HepG2 (cell line): ENCODE measurements at regions of chr5 and their contacts with region 1.

Region 1: DNA sequence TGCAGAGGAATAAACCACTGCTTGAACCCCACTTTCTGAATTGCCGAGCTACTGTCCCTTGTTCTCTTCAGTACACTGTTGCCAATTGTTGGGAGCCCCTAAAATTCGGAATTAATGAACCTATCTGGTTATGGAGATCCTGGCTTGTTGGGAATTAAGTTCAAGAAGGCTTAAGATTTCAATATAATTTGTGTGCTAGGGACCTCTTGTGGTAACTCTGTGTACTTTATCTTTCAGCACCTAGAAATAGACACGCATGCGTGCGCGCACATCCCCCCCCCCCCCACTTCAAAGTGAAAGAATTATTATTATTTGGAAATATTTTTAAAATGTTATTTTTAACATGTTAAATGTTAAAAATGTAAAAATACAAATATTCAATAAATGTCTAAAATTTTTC is 53.3 kb upstream of the FAM169A start:
- DNase-seq: peak; percentile 60
- ATAC-seq: no peak
- H3K4me3 ChIP-seq: no peak overlapping the region
- H3K27ac ChIP-seq: no peak overlapping the region
- H3K4me1 ChIP-seq: peaks cover 51% of the 10 kb centered on the region
- H3K27me3 ChIP-seq: no peaks in the 10 kb centered on the region
- CTCF ChIP-seq: peak; percentile 75
- EP300 ChIP-seq: no peak
- POLR2A ChIP-seq: no peak
- RAD21 ChIP-seq: 0 out of 2 replicates have a peak, but pooled peaks have one; percentile 59

Region 2: GRCh38 chr5:73902327-73903051 is 1017.0 kb before region 1 on chr5:
- CTCF ChIA-PET with region 1: no interaction called
- POLR2A ChIA-PET with region 1: no interaction called
- in situ Hi-C with region 1: no loop called
- intact Hi-C with region 1: loop called (anchors 5 kb)
- DNase-seq: peak; percentile 41
- ATAC-seq: peak; percentile 28; the same call in 2 of the 3 replicates
- H3K4me3 ChIP-seq: no peak overlapping the region
- H3K27ac ChIP-seq: no peak overlapping the region
- H3K4me1 ChIP-seq: no peaks in the 10 kb centered on the region
- H3K27me3 ChIP-seq: no peaks in the 10 kb centered on the region
- CTCF ChIP-seq: peak; percentile 73
- EP300 ChIP-seq: no peak
- POLR2A ChIP-seq: no peak
- RAD21 ChIP-seq: peak; percentile 56; the same call in 1 of the 2 replicates

Region 3: GRCh38 chr5:74673011-74673790 is 246.3 kb before region 1 on chr5:
- CTCF ChIA-PET with region 1: interaction called, 3 read pairs
- POLR2A ChIA-PET with region 1: no interaction called
- in situ Hi-C with region 1: loop called (anchors 5 kb)
- intact Hi-C with region 1: loop called (anchors 1 kb)
- DNase-seq: peak; percentile 29
- ATAC-seq: peak; percentile 47
- H3K4me3 ChIP-seq: no peak overlapping the region
- H3K27ac ChIP-seq: no peak overlapping the region
- H3K4me1 ChIP-seq: peaks cover 52% of the 10 kb centered on the region
- H3K27me3 ChIP-seq: no peaks in the 10 kb centered on the region
- CTCF ChIP-seq: peak; percentile 58
- EP300 ChIP-seq: no peak
- POLR2A ChIP-seq: no peak
- RAD21 ChIP-seq: peak; percentile 45; the same call in 1 of the 2 replicates

Region 4: DNA sequence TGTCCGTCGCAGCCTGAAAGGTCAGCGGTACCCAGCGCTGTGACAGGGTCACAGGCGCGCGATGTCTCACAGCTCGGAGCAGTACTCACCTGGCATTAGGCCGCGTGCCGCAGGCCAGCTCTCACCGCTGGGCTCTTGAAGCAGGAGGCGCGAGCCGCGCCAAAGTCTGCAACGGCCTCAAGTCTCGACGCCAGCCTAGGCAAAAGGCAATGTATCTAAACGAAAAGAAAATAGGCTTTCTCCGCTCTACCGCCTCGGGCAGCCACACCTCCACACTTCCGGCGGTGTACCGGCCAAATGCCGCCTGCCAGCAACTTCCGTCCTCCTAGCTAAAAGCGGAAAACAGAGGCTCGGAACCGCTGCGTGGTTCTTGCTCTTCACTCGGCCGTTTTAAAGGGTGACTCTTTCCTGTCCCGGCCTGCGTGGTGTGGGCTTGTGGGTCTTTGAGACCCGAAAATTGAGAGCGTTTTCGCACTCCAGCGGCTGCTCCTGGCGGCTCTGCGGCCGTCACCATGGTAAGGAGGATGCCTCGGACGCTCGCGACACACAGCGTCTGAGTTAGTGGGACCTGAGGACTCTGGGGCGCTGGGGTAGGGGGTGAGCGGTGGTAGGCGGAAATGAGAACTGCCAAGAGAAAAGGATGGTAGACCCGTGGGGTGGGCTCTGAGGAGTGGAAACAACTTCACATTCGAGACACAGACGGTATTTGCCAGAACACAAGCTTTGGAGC is 152.5 kb before region 1 on chr5 and contains the starts of genes GFM2 and NSA2:
- CTCF ChIA-PET with region 1: interaction called, 14 read pairs
- POLR2A ChIA-PET with region 1: interaction called, 8 read pairs
- in situ Hi-C with region 1: loop called (anchors 5 kb)
- intact Hi-C with region 1: loop called (anchors 5 kb)
- DNase-seq: peak; percentile 87
- ATAC-seq: peak; percentile 91
- H3K4me3 ChIP-seq: peak within 1 kb of the TSS; percentile 87 to 94 (median 93)
- H3K27ac ChIP-seq: peak within 1 kb of the TSS; percentile 69
- H3K4me1 ChIP-seq: peaks cover 27% of the 10 kb centered on the region
- H3K27me3 ChIP-seq: no peaks in the 10 kb centered on the region; a peak in 1 of 5 replicates
- CTCF ChIP-seq: no peak
- EP300 ChIP-seq: peak in 1 of 2 experiments; percentile 33; a peak in 1 of 4 replicates
- POLR2A ChIP-seq: peak; percentile 64 to 69; a peak in 3 of 4 replicates
- RAD21 ChIP-seq: no peak; the same call in none of the 2 replicates
- total RNA-seq, gene GFM2: 41.6 and 49.1 TPM in 2 replicates
- total RNA-seq, gene NSA2: 101 and 157 TPM in 2 replicates

Region 5: GRCh38 chr5:74865804-74866595 is 53.5 kb before region 1 on chr5 and contains the start of gene FAM169A:
- CTCF ChIA-PET with region 1: no interaction called
- POLR2A ChIA-PET with region 1: interaction called, 13 read pairs
- in situ Hi-C with region 1: no loop called
- intact Hi-C with region 1: loop called (anchors 2 kb)
- DNase-seq: no peak
- ATAC-seq: peak; percentile 65
- H3K4me3 ChIP-seq: peak within 1 kb of the TSS; percentile 87 to 97 (median 95)
- H3K27ac ChIP-seq: peak within 1 kb of the TSS; percentile 96
- H3K4me1 ChIP-seq: peaks cover 77% of the 10 kb centered on the region
- H3K27me3 ChIP-seq: no peaks in the 10 kb centered on the region; a peak in 1 of 5 replicates
- CTCF ChIP-seq: peak; percentile 30; the same call in 1 of the 2 replicates
- EP300 ChIP-seq: no peak
- POLR2A ChIP-seq: peak in 1 of 2 experiments; percentile 54; a peak in 2 of 4 replicates
- RAD21 ChIP-seq: peak; percentile 53
- total RNA-seq, gene FAM169A: 84.8 and 110 TPM in 2 replicates

Region 6: DNA sequence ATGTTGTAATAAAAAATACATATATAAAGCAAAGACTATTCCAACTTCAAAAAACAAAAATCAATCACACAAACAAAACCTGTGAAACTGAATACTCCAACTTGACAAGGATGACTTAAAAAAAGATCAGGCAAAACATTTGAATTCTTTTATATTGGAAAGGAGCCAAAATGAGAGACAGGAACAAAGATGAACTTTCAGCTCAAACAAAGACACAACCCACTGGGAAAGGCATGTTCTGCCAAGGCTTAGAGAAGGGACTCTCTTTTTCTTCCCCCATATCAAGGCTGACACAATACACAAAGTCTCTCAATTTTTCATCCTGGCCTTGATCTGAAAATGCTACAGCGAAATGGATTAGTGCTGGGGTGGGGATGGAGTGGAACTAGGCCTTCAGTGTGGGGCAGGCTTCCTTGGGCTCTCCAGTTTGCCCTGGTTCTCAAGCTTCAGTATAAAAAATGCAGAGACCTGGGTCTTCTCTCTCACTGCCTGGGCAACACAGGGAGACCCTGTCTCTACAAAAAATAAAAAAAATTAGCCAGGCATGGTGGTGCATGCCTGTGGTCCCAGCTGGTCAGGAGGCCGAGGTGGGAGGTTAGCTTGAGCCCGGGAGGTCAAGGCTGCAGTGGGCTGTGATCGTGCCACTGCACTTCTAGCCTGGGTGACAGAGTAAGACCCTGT is 41.7 kb before region 1 on chr5:
- CTCF ChIA-PET with region 1: interaction called, 3 read pairs
- POLR2A ChIA-PET with region 1: interaction called, 26 read pairs
- in situ Hi-C with region 1: no loop called
- intact Hi-C with region 1: loop called (anchors 2 kb)
- DNase-seq: peak; percentile 90
- ATAC-seq: peak; percentile 77
- H3K4me3 ChIP-seq: peak overlapping the region in 2 of 3 experiments; percentile 14 to 42; a peak in 4 of 6 replicates
- H3K27ac ChIP-seq: peak overlapping the region; percentile 96
- H3K4me1 ChIP-seq: peaks cover 74% of the 10 kb centered on the region
- H3K27me3 ChIP-seq: no peaks in the 10 kb centered on the region
- CTCF ChIP-seq: no peak
- EP300 ChIP-seq: peak in 1 of 2 experiments; percentile 93; a peak in 2 of 4 replicates
- POLR2A ChIP-seq: peak; percentile 24 to 36; a peak in 1 of 4 replicates
- RAD21 ChIP-seq: no peak

Region 7: GRCh38 chr5:74974451-74975091 is 55.1 kb after region 1 on chr5:
- CTCF ChIA-PET with region 1: no interaction called
- POLR2A ChIA-PET with region 1: no interaction called
- in situ Hi-C with region 1: no loop called
- intact Hi-C with region 1: no loop called
- DNase-seq: no peak
- ATAC-seq: no peak
- H3K4me3 ChIP-seq: no peak overlapping the region
- H3K27ac ChIP-seq: no peak overlapping the region
- H3K4me1 ChIP-seq: peaks cover 38% of the 10 kb centered on the region
- H3K27me3 ChIP-seq: no peaks in the 10 kb centered on the region
- CTCF ChIP-seq: no peak
- EP300 ChIP-seq: no peak
- POLR2A ChIP-seq: no peak
- RAD21 ChIP-seq: no peak

Region 8: GRCh38 chr5:75192804-75193203 is 273.3 kb after region 1 on chr5:
- CTCF ChIA-PET with region 1: no interaction called
- POLR2A ChIA-PET with region 1: no interaction called
- in situ Hi-C with region 1: no loop called
- intact Hi-C with region 1: no loop called
- DNase-seq: no peak
- ATAC-seq: no peak
- H3K4me3 ChIP-seq: no peak overlapping the region
- H3K27ac ChIP-seq: no peak overlapping the region
- H3K4me1 ChIP-seq: peaks cover 12% of the 10 kb centered on the region
- H3K27me3 ChIP-seq: no peaks in the 10 kb centered on the region
- CTCF ChIP-seq: no peak
- EP300 ChIP-seq: no peak
- POLR2A ChIP-seq: no peak
- RAD21 ChIP-seq: no peak

Region 9: DNA sequence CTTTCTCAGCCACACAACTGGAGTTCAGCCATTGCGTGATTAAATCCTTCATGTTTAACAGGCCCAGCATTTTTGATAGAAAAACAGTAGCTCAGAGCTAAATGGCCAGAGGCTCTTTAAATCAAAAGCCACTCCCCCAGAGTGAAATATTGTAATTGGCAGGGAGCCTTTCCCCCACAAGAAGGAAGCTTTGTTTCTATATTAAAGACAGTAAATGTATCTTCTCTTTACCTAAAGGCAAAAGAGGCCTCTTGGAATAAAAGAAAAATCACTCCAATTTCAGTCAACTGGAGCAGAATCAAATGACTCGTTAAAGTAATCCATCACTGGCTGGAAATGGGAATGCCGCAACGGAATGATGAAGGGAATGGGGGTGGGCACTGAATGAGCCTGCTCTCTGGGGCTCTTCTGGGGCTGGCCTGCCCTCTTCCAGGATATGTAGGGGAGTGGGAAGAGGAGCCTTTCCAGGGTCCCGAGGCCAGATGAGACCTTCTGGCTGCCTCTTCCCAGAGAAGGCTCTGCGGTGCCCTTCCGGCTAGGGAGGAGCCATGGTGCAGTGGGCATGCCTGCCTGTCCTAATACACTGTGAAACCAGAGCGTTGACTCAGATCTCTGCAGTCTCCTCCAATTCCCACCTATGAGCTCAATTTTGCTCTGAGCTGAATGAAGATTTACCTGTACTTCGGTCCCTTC is 737.0 kb after region 1 on chr5:
- CTCF ChIA-PET with region 1: no interaction called
- POLR2A ChIA-PET with region 1: no interaction called
- in situ Hi-C with region 1: no loop called
- intact Hi-C with region 1: no loop called
- DNase-seq: no peak
- ATAC-seq: peak; percentile 81
- H3K4me3 ChIP-seq: peak overlapping the region in 2 of 3 experiments; percentile 35 to 40; a peak in 2 of 6 replicates
- H3K27ac ChIP-seq: no peak overlapping the region
- H3K4me1 ChIP-seq: no peaks in the 10 kb centered on the region
- H3K27me3 ChIP-seq: peaks cover 0 to 16% of the 10 kb centered on the region in 2 experiments; a peak in 1 of 5 replicates
- CTCF ChIP-seq: no peak
- EP300 ChIP-seq: no peak
- POLR2A ChIP-seq: no peak
- RAD21 ChIP-seq: no peak